Psoas muscle (tissue), 8 donors: ENCODE measurements at regions of chr15 and their contacts with region 1.

Region 1: GRCh38 chr15:38252481-38253412 is at the start of gene SPRED1:
- DNase-seq: peak; percentile 81 to 86
- ATAC-seq: peak; percentile 62 to 72 (median 68)
- H3K4me3 ChIP-seq: peak within 1 kb of the TSS; percentile 90
- H3K27ac ChIP-seq: peak within 1 kb of the TSS; percentile 93
- H3K4me1 ChIP-seq: peaks cover 3% of the 10 kb centered on the region
- H3K27me3 ChIP-seq: no peaks in the 10 kb centered on the region
- CTCF ChIP-seq: no peak
- total RNA-seq, gene SPRED1: 4.2 to 7.1 (median 5.7) TPM

Region 2: GRCh38 chr15:38072348-38073177 is 180.2 kb before region 1 on chr15:
- intact Hi-C with region 1: loop called in 1 of 2 experiments (anchors 5 kb)
- DNase-seq: peak; percentile 76 to 81
- ATAC-seq: peak; percentile 65 to 86 (median 76)
- H3K4me3 ChIP-seq: peak overlapping the region; percentile 61
- H3K27ac ChIP-seq: peak overlapping the region; percentile 69
- H3K4me1 ChIP-seq: peaks cover 3% of the 10 kb centered on the region
- H3K27me3 ChIP-seq: peaks cover 0 to 18% (median 2%) of the 10 kb centered on the region in 3 donors
- CTCF ChIP-seq: no peak

Region 3: DNA sequence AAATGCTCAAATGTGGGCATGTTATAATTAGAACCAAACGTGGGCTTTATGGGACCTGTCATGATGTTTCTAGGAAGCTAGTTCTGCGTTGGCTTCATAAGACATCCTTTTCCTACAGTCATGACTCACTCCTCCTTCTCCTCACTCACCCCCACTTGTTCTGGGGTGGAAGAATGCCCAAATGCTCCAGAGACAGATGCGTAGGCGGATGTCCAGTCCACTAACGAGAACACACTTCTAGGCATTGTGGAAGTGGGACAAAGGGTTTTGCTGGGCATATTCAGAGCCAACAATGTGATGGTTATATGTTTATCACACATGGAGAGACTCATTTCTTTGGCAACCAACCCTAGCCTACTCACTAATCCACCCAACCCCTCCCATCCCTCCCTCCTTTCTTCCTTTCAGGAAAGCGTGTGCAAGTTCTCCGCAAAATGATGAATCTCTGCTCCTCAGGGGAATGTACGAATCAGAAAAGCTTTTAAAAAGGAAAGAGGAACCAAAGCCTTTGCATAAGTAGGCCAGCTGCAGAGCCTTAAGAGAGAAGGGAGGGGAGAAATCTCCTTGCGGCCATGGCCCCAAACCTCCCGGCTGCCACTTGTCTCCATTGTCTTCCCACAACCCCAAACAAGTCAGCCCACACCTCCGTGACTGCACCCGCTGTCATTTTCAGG is 123.1 kb before region 1 on chr15:
- intact Hi-C with region 1: loop called in 1 of 2 experiments (anchors 10 kb)
- DNase-seq: peak; percentile 66 to 68
- ATAC-seq: peak; percentile 65 to 80 (median 78)
- H3K4me3 ChIP-seq: peak overlapping the region; percentile 13
- H3K27ac ChIP-seq: peak overlapping the region; percentile 62
- H3K4me1 ChIP-seq: peaks cover 4% of the 10 kb centered on the region
- H3K27me3 ChIP-seq: no peaks in the 10 kb centered on the region
- CTCF ChIP-seq: no peak

Region 4: DNA sequence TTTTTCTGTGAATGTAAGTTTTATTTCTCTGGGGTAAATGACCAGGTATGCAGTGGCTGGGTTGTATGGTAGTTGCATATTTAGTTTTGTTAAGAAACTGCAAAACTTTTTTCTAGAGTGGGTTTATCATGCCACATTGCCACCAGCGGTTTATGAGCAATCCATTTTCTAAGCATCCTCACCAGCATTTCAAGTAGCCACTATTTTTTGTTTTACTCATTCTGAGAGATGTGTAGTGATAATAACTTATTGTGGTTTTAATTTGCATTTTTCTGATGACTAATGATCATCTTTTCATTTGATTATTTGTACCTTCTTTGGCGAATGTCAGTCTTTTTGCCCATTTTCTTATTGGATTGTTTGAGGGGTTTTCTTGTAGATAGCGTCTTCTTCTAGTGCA is 56.0 kb after region 1 on chr15:
- intact Hi-C with region 1: loop called in 1 of 2 experiments (anchors 5 kb)
- DNase-seq: no peak
- ATAC-seq: no peak
- H3K4me3 ChIP-seq: no peak overlapping the region
- H3K27ac ChIP-seq: no peak overlapping the region
- H3K4me1 ChIP-seq: no peaks in the 10 kb centered on the region
- H3K27me3 ChIP-seq: no peaks in the 10 kb centered on the region
- CTCF ChIP-seq: no peak

Region 5: GRCh38 chr15:38354315-38354929 is 101.7 kb after region 1 on chr15:
- intact Hi-C with region 1: loop called in 1 of 2 experiments (anchors 5 kb)
- DNase-seq: peak; percentile 29 to 45
- ATAC-seq: peak in 2 of 4 donors; percentile 47 to 71
- H3K4me3 ChIP-seq: no peak overlapping the region
- H3K27ac ChIP-seq: no peak overlapping the region
- H3K4me1 ChIP-seq: no peaks in the 10 kb centered on the region
- H3K27me3 ChIP-seq: no peaks in the 10 kb centered on the region
- CTCF ChIP-seq: peak; percentile 79

Region 6: DNA sequence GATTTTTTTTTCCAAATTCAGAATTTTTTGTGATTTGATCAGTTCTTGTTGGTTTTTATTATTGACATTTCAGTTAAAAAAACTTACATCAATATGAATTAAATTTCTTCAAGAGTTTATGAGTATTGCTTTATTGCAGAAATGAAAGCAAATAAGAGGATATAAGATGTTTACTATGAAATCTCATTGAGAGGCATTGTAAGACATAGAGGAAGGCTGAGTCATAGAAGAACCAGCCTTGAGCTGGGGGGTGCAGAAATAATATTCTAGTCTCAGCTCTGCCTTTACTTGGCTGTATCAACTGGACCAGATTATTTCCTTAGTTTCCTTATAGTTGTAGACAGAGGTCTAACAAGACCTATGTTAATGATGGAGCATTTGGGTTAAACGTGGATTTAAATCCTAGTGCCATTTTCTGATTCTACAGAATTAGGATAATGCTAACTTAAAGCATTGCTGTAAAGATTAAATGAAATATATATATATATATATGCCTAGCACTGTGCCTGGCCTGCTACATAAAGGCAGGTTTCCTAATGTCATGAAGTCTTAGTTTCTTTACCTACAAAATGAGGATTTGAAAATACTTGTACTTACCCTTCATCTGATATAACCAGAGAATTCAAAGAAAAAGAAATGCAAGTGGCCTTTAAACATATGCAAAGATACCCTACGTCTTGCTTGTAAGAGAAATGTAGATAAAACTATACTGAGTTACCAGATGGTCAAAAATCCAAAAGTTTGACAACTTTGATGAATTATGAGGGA is 208.5 kb after region 1 on chr15:
- intact Hi-C with region 1: no loop called
- DNase-seq: no peak
- ATAC-seq: no peak
- H3K4me3 ChIP-seq: no peak overlapping the region
- H3K27ac ChIP-seq: no peak overlapping the region
- H3K4me1 ChIP-seq: peaks cover 10% of the 10 kb centered on the region
- H3K27me3 ChIP-seq: no peaks in the 10 kb centered on the region
- CTCF ChIP-seq: no peak